Panc1 (cell line): ENCODE measurements at regions of chr1 and their contacts with region 1.

Region 1: DNA sequence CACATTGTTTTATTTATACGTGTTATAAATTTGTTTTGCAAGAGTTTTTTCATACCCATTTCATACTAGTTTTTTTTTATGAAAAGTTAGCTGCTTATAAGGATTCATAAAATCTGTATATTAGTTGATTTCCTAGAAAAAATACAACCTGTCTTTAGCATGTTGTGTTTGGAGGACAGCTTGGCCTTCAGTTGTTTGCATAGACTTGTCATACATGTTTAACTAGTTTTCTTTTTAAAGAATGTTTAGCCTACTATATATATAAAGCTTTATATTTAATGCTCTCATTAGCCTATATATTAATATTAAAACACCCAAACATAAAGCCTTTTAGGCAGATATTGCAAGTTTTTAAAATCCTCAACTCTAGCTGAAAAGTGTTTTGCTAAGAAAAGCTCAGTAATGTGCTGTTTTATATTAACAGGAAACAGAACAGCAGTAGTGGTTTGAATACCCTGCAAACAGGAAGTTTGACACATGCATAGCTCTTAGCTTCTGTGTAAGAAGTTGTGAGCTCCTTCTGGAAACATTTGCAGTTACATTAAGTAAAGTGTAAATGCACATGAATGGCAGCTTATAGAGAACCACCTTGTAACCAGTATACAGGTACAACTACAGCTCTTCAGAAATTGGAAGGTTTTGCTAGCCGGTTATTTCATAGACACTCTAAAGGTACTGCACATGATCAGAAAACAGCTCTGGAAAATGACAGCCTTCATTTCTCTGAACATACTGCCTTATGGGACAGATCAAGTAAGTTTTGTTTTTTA is at the start of gene PRKACB:
- DNase-seq: peak; percentile 51
- ATAC-seq: peak; percentile 76
- H3K4me3 ChIP-seq: no peak within 1 kb of the TSS
- H3K27ac ChIP-seq: peak within 1 kb of the TSS; percentile 23
- H3K4me1 ChIP-seq: peaks cover 22% of the 10 kb centered on the region
- H3K27me3 ChIP-seq: no peaks in the 10 kb centered on the region
- CTCF ChIP-seq: no peak
- total RNA-seq, gene PRKACB: 54.9 TPM

Region 2: GRCh38 chr1:84060781-84061180 is 83.2 kb before region 1 on chr1:
- CTCF ChIA-PET with region 1: interaction called, 5 read pairs
- POLR2A ChIA-PET with region 1: interaction called, 15 read pairs
- in situ Hi-C with region 1: no loop called
- intact Hi-C with region 1: no loop called
- DNase-seq: no peak
- ATAC-seq: no peak
- H3K4me3 ChIP-seq: no peak overlapping the region
- H3K27ac ChIP-seq: no peak overlapping the region
- H3K4me1 ChIP-seq: no peaks in the 10 kb centered on the region
- H3K27me3 ChIP-seq: peaks cover 6% of the 10 kb centered on the region
- CTCF ChIP-seq: no peak

Region 3: DNA sequence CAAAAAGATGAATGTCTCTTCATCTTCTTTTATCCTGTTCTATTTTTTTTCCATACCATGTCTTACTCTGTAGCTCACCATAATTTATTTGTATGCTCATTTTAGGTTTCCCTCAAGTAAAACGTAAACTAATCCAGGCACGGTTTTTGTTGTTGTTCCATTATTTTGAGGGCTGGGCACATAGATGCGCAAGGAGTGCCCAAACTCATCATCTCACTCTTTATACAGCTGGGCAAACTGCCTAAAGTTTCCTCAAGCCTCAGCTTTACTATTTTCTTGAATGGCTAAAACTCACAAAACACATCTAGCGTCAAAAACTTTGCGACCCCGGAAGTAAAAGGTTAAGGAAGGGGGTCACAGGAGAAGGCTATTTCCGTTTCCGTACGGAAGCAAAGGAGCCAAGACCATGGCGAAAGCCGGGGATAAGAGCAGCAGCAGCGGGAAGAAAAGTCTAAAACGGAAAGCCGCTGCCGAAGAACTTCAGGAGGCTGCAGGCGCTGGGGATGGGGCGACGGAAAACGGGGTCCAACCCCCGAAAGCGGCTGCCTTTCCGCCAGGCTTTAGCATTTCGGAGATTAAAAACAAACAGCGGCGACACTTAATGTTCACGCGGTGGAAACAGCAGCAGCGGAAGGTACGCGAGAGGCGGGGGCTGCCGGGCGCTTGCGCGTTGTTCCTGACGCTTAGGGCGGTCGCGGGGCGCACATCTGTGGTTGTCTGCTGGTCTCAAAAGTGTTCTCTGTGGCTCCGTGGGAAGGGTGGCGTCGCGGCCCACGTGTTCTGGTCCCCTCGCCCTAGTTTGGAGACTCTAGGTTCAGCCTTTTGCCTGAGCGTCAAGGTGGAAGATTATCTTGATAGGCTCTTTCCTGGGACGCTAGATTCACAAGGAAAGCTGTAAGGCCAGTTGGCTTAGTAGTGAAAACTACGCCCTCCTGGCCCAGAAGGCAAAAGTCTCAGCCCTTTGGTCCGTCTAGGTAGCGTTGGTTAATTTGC is 335.2 kb after region 1 on chr1 and contains the start of gene RPF1:
- CTCF ChIA-PET with region 1: interaction called, 3 read pairs
- POLR2A ChIA-PET with region 1: no interaction called
- in situ Hi-C with region 1: no loop called
- intact Hi-C with region 1: loop called (anchors 1 kb)
- DNase-seq: peak; percentile 89
- ATAC-seq: peak; percentile 99
- H3K4me3 ChIP-seq: peak within 1 kb of the TSS; percentile 71 to 81
- H3K27ac ChIP-seq: peak within 1 kb of the TSS; percentile 93
- H3K4me1 ChIP-seq: peaks cover 11% of the 10 kb centered on the region
- H3K27me3 ChIP-seq: no peaks in the 10 kb centered on the region
- CTCF ChIP-seq: no peak
- total RNA-seq, gene RPF1: 73.0 TPM

Region 4: DNA sequence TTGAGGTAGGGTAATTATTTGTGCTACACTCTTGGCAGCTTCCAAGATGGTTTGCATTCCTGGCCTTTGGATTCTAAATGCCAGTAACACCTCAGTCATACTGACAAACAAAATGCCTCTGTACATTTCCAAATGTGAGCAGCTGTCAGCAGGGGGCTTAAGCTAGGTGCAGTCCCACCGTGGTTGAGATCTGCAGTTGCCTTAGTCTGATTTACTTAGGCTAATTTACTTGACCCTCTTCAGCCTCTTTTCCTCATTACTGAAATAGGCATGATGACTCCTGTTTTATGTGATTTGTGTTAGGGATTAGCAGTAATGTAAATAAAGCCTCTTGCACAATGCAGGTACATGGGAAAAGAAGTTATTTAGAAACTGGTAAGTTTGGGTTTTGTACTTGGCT is 348.7 kb after region 1 on chr1:
- CTCF ChIA-PET with region 1: no interaction called
- POLR2A ChIA-PET with region 1: no interaction called
- in situ Hi-C with region 1: no loop called
- intact Hi-C with region 1: loop called (anchors 5 kb)
- DNase-seq: no peak
- ATAC-seq: no peak
- H3K4me3 ChIP-seq: no peak overlapping the region
- H3K27ac ChIP-seq: no peak overlapping the region
- H3K4me1 ChIP-seq: no peaks in the 10 kb centered on the region
- H3K27me3 ChIP-seq: no peaks in the 10 kb centered on the region
- CTCF ChIP-seq: 0 out of 2 replicates have a peak, but pooled peaks have one; percentile 28

Region 5: GRCh38 chr1:84763912-84764663 is 620.1 kb after region 1 on chr1:
- CTCF ChIA-PET with region 1: no interaction called
- POLR2A ChIA-PET with region 1: no interaction called
- in situ Hi-C with region 1: no loop called
- intact Hi-C with region 1: loop called (anchors 10 kb)
- DNase-seq: no peak
- ATAC-seq: no peak
- H3K4me3 ChIP-seq: no peak overlapping the region
- H3K27ac ChIP-seq: no peak overlapping the region
- H3K4me1 ChIP-seq: peaks cover 3% of the 10 kb centered on the region; the same call in 1 of the 2 replicates
- H3K27me3 ChIP-seq: peaks cover 14% of the 10 kb centered on the region
- CTCF ChIP-seq: no peak

Region 6: DNA sequence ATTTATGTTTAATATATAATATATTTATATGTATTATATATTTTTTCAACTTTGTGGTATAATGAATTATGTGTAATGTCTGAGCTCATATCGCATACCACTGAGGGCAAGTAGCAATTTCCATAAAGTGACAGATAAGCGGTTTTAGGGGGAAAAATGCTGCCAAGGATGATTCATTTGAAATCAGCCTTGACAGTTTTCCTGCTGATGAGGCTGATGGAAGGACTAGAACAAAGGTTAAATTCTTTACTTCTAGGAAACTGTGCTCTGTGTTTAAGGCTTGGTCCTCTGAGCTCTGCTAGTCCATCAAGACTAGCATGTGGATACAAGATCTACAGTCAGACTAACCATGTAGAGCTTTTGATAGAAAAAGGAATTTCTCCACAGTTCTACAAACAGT is 1340.3 kb after region 1 on chr1:
- CTCF ChIA-PET with region 1: no interaction called
- POLR2A ChIA-PET with region 1: no interaction called
- in situ Hi-C with region 1: no loop called
- intact Hi-C with region 1: no loop called
- DNase-seq: no peak
- ATAC-seq: no peak
- H3K4me3 ChIP-seq: no peak overlapping the region
- H3K27ac ChIP-seq: 0 out of 2 replicates have a peak overlapping the region, but pooled peaks have one; percentile 5
- H3K4me1 ChIP-seq: no peaks in the 10 kb centered on the region
- H3K27me3 ChIP-seq: no peaks in the 10 kb centered on the region
- CTCF ChIP-seq: no peak